Posterior vena cava (tissue), 2 donors: ENCODE measurements at regions of chr5 and their contacts with region 1.

Region 1: DNA sequence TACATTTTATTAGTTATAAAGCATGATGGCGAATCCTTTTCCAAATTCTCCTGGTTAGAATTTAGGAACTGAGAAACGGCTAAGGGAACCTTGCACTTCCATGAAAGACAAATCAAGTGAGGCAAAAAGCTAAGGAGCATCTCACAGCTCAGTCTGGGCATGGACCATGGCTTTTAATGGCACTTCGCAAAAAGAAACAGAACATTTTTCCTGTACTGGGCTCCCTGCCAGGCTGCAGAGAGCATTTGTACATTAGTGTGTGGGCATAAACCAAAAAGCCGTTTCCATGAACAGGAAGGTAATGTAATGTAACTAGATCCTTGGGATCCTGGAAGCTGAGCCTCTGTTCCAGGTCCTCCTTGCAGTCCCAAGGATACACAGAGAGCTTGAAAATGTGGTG is 354.2 kb downstream of the MRPS30 start:
- DNase-seq: no peak

Region 2: DNA sequence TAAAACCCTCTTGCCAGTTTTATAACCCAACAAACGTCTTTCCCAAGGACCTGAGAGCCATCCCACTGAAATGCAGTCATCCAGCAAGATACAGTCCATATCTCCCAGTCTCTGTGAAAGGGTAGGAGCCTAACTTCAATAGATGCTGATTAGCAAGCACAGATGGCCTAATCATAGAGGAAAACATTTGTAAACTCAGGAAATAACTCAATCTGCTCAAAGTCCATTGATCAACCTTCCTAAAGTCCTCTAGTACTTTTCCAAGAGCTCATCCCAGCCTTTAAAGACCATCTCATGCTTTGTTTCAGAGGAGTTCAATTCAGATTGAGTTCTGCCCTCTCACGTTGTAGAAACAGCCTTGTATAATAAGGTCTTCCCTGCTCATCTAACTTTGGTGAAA is 30.0 kb before region 1 on chr5:
- intact Hi-C with region 1: loop called in 1 of 2 experiments (anchors 2 kb)
- DNase-seq: no peak